Left cardiac atrium (tissue), 4 donors: ENCODE measurements at regions of chr7 and their contacts with region 1.

Region 1: DNA sequence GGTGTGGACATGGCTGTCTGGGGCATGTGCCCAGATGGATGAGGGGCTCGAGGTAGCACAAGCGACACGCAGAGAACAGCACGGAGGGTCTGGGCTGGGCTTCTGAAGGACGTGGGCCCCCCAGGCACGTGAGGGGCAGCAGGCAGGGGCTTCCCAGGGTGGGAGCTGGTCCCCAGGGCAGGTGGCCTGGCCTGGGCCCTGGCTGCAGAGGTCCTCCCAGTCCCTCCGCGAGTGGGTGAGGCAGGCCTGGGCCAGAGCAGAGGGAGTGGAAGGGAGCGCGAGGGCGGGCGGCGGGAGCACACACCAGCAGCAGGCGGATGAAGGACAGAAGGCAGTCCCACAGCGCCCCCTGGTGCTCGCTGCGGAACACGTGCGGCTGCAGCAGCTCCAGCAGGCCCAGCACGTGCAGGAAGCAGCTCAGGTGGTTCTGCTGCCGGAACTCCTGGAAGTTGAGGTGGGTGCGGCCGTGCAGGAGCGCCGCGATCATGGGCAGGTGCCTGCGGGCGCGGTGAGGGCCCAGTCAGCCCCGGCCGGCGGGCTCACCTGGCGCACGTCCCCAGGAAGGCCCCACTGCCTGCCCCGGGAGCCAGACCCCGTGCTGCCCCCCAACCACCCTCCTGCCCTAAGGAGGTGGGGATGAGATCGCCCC is 14.7 kb upstream of the MICALL2 start:
- DNase-seq: peak; percentile 88
- ATAC-seq: peak; percentile 68 to 82

Region 2: GRCh38 chr7:1193593-1194424 is 280.2 kb before region 1 on chr7:
- intact Hi-C with region 1: loop called in 1 of 2 experiments (anchors 5 kb)
- DNase-seq: no peak
- ATAC-seq: peak; percentile 84 to 90

Region 3: GRCh38 chr7:1225441-1226185 is 248.4 kb before region 1 on chr7:
- intact Hi-C with region 1: loop called in 1 of 2 experiments (anchors 2 kb)
- DNase-seq: no peak
- ATAC-seq: peak; percentile 42 to 51

Region 4: GRCh38 chr7:1425292-1426136 is 48.5 kb before region 1 on chr7:
- intact Hi-C with region 1: loop called in 1 of 2 experiments (anchors 2 kb)
- DNase-seq: no peak
- ATAC-seq: no peak